Aorta (tissue), 5 donors: ENCODE measurements at regions of chr7 and their contacts with region 1.

Region 1: GRCh38 chr7:117323851-117324701 is 1.2 kb upstream of the WNT2 start:
- DNase-seq: peak; percentile 68 to 87
- ATAC-seq: peak; percentile 81
- H3K4me3 ChIP-seq: peak overlapping the region; percentile 48 to 52
- H3K27ac ChIP-seq: no peak overlapping the region
- H3K4me1 ChIP-seq: no peaks in the 10 kb centered on the region
- H3K27me3 ChIP-seq: no peaks in the 10 kb centered on the region

Region 2: DNA sequence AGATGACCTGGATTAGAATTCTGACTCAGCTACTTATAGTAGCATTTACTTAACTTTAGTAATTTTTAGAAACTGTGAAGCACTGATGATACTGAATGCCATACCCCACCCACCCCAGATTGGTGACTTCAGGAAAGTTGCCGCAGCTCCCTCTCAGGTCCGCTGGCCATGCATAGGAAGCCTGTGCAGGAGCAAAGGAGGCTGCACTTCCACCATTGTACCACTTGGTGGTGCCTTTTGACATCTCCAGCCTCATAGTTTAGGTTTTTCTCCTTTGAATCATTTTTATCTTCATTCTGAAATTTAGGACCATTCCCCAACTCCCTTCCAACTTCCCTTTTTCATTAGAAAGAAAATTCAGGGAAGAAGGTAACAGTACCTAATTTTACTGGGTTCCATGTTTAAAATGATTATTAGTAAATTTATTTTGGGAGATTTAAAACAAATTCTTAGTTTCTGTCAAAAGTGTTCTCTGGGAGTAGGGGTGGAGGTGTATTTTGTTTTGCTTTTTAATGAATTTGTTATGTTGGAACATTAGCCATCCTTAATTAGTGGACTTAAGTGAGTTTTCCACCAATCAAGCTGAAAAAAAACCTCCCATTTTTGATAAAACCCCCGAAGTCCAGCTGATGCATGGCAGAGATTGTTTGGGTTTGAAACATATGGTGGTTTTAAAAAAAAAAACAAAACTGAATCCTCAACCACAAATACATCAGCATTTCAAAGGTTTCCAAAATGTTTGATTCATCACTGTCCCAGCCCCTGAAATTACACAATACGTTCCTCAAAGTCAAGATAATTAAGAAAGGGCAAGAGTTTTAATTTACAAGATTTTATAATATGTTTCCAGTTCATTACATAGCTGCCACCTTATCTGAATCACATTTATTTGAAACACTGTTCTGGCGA is 110.9 kb before region 1 on chr7:
- intact Hi-C with region 1: loop called in 1 of 2 experiments (anchors 10 kb)
- DNase-seq: no peak
- ATAC-seq: peak; percentile 80
- H3K4me3 ChIP-seq: no peak overlapping the region
- H3K27ac ChIP-seq: no peak overlapping the region
- H3K4me1 ChIP-seq: no peaks in the 10 kb centered on the region
- H3K27me3 ChIP-seq: no peaks in the 10 kb centered on the region

Region 3: DNA sequence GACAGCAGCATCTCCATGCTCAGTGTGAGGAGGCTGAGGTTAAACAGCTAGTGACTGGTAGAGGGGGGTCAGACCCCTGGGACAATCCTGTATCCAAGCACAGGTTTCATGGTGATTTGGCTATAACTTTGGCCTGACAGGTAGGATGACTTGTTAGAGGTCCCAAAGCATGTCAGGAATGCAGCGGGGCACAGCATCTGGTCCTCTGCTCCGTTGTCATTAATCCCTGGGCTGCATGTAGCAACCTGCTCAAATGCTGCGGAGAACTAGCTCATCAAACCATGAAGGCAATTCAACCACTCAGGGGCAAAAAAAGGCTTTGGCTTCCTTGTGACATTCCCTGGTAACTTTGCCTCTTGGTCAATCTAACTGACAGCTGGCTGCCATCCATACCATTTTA is 28.0 kb before region 1 on chr7:
- intact Hi-C with region 1: no loop called
- DNase-seq: no peak
- ATAC-seq: no peak
- H3K4me3 ChIP-seq: no peak overlapping the region
- H3K27ac ChIP-seq: no peak overlapping the region
- H3K4me1 ChIP-seq: no peaks in the 10 kb centered on the region
- H3K27me3 ChIP-seq: no peaks in the 10 kb centered on the region

Region 4: DNA sequence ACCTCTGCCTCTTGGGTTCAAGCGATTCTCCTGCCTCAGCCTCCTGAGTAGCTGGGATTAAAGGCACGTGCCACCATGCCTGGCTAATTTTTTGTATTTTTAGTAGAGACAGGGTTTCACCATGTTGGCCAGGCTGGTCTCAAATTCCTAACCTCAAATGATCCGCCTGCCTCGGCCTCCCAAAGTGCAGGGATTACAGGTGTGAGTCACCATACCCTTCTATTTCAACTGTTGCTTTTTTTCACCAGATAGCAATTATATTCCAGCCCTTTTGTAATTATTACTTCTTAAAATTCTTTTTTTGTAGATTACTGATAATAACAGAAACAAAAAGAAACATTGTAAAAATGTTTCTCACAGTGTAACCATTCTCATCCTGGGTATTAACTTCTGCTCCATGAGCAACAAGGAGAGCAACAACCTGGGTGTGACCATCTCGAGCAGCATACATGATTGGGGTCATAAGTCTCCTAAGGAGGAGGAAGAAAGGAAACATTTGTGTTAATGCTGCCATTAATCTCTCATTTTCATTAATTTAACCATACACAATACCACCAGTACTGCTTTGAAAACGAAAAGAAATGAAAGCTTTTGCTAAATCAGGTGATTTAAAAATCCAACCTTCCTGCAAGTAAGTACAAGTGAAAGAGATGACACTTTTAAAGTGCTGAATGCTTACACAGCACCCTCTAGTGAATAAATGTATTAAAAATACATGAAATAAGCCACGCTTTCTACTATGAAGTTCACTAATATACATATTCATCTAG is 61.4 kb after region 1 on chr7:
- intact Hi-C with region 1: no loop called
- DNase-seq: no peak
- ATAC-seq: no peak
- H3K4me3 ChIP-seq: no peak overlapping the region
- H3K27ac ChIP-seq: no peak overlapping the region
- H3K4me1 ChIP-seq: no peaks in the 10 kb centered on the region
- H3K27me3 ChIP-seq: no peaks in the 10 kb centered on the region

Region 5: DNA sequence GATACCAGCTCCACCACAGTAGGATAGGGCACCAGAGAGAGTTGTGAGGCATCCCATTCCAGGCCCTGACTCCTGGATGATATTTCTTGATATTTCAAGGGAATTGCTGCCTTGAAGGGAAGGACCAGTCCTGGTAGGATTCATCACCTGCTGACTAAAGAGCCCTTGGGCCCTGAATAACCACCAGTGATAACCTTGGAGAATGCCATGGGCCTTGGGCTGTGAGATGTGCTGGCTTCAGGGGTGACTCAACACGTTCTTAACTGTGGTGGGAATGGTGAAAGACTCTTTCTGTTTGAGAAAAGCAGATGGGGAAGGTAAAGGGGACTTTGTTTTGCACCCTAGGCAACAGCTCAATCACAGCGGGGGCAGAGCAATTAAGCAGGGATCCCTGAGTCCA is 124.6 kb after region 1 on chr7:
- intact Hi-C with region 1: no loop called
- DNase-seq: no peak
- ATAC-seq: no peak
- H3K4me3 ChIP-seq: no peak overlapping the region
- H3K27ac ChIP-seq: no peak overlapping the region
- H3K4me1 ChIP-seq: no peaks in the 10 kb centered on the region
- H3K27me3 ChIP-seq: no peaks in the 10 kb centered on the region